ENCODE measurements at regions of chr3 and their contacts with region 1.

Region 1: GRCh38 chr3:38117748-38118420 is 19.0 kb downstream of the ACAA1 start:
- DNase-seq: peak; percentile 78
- H3K4me3 ChIP-seq: no peak overlapping the region
- H3K27ac ChIP-seq: no peak overlapping the region
- H3K4me1 ChIP-seq: no peaks in the 10 kb centered on the region
- H3K27me3 ChIP-seq: no peaks in the 10 kb centered on the region

Region 2: GRCh38 chr3:36918050-36918449 is 1199.8 kb before region 1 on chr3:
- in situ Hi-C with region 1: no loop called
- DNase-seq: no peak
- H3K4me3 ChIP-seq: no peak overlapping the region
- H3K27ac ChIP-seq: no peak overlapping the region
- H3K4me1 ChIP-seq: no peaks in the 10 kb centered on the region
- H3K27me3 ChIP-seq: no peaks in the 10 kb centered on the region

Region 3: DNA sequence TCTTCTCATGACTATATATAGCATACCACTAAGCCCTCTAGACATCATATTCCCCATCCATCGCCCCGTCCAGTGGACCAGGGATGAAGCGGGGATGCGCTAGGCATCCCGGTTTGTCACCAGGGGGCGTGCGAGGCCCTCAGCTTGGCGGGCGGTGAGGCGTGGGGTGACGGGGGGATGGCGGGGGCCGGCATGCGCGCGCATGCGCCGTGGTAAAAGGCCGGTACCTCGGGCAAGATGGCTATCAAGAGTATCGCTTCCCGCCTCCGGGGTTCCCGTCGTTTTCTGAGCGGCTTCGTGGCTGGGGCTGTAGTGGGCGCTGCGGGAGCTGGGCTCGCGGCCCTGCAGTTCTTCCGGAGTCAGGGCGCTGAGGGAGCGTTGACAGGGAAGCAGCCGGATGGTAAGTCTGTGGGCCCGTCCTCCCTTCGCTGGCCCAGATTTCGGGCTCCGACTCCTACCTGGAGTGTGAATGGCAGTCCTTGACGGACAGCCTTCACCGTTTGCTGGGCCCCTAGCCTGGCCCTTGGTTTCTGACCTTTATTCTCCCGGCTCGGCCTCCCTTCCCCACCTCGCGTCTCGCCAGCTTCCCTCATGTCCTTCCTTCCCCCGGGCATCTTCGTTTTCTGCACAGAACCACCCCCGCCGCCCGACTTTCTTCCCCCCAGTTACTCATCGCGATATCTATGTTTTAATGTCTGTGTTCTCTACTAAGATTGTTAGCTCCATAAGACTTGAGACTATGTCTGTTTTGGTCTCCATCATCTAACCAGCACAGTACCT is 378.4 kb after region 1 on chr3 and contains the start of gene EXOG:
- in situ Hi-C with region 1: loop called (anchors 25 kb)
- DNase-seq: peak; percentile 95
- H3K4me3 ChIP-seq: peak within 1 kb of the TSS; percentile 82
- H3K27ac ChIP-seq: peak within 1 kb of the TSS; percentile 34
- H3K4me1 ChIP-seq: peaks cover 8% of the 10 kb centered on the region; the same call in 1 of the 2 replicates
- H3K27me3 ChIP-seq: no peaks in the 10 kb centered on the region
- total RNA-seq, gene EXOG: 6.4 and 8.6 TPM in 2 replicates

Measured in GM23248 (cell line).